ENCODE measurements at regions of chr17 and their contacts with region 1.

Region 1: DNA sequence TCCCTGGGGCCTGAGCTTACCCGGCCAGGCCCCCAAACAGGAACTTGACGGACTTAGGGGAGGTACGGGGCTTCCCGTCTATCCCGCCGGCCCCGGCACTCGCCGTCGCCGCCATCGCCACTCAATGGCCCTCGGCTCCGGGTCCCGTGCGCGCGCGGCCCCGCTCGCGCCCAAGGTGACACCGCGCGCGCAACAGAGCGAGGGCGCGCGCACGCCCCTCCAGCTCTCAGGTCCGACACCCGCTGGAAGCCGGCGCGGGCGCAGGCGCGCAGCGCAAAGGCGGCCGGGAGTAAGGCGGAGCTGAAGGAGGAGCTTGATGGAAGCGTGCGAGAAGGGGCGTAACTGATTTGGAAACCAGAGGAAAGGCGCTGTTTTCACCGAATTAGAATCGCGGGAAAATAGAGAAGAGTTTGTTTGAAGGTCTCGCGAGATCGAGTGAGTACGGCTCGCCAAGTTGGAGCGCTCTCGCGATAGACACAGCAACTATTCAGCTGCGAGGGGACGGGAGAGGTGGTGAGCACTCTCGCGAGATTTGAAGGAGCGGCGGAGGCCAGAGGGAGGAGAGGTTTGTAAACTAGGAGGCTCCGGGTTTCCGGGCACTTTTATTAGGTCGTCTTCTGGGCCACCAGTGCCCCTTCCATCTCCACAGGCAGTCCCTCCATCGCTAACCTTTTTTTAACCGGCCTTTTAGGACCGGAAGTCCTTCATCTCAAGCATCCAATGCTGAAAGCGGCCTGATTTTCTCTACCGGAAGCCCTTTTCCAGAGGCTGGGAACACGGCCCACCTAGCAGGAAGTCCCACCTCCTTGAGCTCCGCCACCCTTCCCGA is at the starts of genes RNF167 and SLC25A11:
- DNase-seq: peak; percentile 98
- ATAC-seq: peak; percentile 85
- H3K4me3 Mint-ChIP-seq: peak within 1 kb of the TSS; percentile 97
- H3K27ac Mint-ChIP-seq: peak within 1 kb of the TSS; percentile 98
- H3K4me1 Mint-ChIP-seq: peaks cover 57% of the 10 kb centered on the region
- H3K27me3 Mint-ChIP-seq: no peaks in the 10 kb centered on the region
- CTCF ChIP-seq: no peak
- total RNA-seq, gene RNF167: 144 to 152 TPM
- total RNA-seq, gene SLC25A11: 80.8 to 87.0 TPM

Region 2: DNA sequence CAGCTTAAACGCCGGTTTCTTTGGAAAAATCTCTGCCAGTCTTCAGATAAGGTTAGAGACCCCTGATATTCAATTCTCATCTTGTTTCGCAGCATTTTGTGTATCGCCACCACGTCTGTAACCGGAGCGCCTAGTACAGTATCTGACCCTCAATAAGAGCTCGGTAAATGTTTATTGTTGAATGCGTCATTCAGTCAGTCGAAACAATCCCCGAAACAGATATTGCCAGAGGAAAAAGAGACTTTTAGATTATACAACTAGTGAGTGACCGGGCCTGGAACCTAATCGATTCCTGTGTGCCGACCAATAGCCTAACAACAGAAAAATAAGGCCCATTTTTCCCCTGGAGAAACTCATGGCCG is 236.7 kb before region 1 on chr17:
- CTCF ChIA-PET with region 1: no interaction called
- POLR2A ChIA-PET with region 1: interaction called, 10 read pairs
- intact Hi-C with region 1: no loop called
- DNase-seq: no peak
- ATAC-seq: no peak
- H3K4me3 Mint-ChIP-seq: peak overlapping the region; percentile 79
- H3K27ac Mint-ChIP-seq: peak overlapping the region; percentile 98
- H3K4me1 Mint-ChIP-seq: peaks cover 42% of the 10 kb centered on the region
- H3K27me3 Mint-ChIP-seq: no peaks in the 10 kb centered on the region
- CTCF ChIP-seq: no peak

Region 3: DNA sequence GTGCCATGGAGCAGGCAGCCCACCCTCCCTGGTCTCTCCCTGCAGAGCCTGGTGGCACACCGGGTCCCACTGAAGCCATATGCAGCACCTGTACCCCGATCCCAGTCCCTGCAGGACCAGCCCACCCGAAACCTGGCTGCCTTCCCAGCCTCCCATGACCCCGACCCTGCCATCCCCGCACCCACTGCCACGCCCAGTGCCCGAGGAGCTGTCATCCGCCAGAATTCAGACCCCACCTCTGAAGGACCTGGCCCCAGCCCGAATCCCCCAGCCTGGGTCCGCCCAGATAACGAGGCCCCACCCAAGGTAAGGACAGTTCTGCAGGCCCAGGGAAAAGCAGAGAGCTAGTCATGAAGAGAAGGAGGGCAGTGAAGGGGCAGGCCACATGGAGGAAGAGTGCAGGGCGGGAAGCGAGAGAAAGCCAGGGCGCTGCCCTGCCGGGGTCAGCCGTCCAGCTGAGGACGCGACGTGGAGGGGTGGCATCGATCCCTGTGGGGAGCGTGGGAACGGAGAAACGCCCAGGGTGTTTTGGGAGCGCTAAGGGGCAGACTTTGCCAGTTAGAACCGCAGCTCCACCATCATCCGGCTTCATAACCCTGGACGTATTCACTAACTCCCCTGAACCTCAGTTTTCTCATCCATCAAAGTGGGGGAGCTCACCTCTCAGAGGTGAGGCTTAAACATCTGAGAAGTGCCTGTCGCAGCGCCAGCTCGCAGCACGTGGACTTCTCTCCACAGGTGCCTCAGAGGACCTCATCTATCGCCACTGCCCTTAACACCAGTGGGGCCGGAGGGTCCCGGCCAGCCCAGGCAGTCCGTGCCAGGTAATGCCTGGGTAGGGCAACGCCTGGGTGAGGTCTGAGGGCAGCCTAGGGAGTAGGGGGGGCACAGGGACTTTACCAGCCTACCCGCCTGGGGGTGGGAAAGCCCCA is 48.3 kb before region 1 on chr17:
- CTCF ChIA-PET with region 1: no interaction called
- POLR2A ChIA-PET with region 1: no interaction called
- intact Hi-C with region 1: no loop called
- DNase-seq: no peak
- ATAC-seq: no peak
- H3K4me3 Mint-ChIP-seq: no peak overlapping the region
- H3K27ac Mint-ChIP-seq: no peak overlapping the region
- H3K4me1 Mint-ChIP-seq: no peaks in the 10 kb centered on the region
- H3K27me3 Mint-ChIP-seq: no peaks in the 10 kb centered on the region
- CTCF ChIP-seq: no peak

Region 4: GRCh38 chr17:4908301-4908700 is 31.7 kb before region 1 on chr17:
- CTCF ChIA-PET with region 1: interaction called, 24 read pairs
- POLR2A ChIA-PET with region 1: interaction called, 41 read pairs
- intact Hi-C with region 1: no loop called
- DNase-seq: peak; percentile 31
- ATAC-seq: peak; percentile 11
- H3K4me3 Mint-ChIP-seq: no peak overlapping the region
- H3K27ac Mint-ChIP-seq: no peak overlapping the region
- H3K4me1 Mint-ChIP-seq: peaks cover 12% of the 10 kb centered on the region
- H3K27me3 Mint-ChIP-seq: no peaks in the 10 kb centered on the region
- CTCF ChIP-seq: no peak

Region 5: GRCh38 chr17:4928881-4929280 is 11.1 kb before region 1 on chr17:
- CTCF ChIA-PET with region 1: interaction called, 3 read pairs
- POLR2A ChIA-PET with region 1: interaction called, 10 read pairs
- intact Hi-C with region 1: no loop called
- DNase-seq: no peak
- ATAC-seq: no peak
- H3K4me3 Mint-ChIP-seq: no peak overlapping the region
- H3K27ac Mint-ChIP-seq: no peak overlapping the region
- H3K4me1 Mint-ChIP-seq: peaks cover 4% of the 10 kb centered on the region
- H3K27me3 Mint-ChIP-seq: no peaks in the 10 kb centered on the region
- CTCF ChIP-seq: no peak

Region 6: GRCh38 chr17:4986951-4987766 is 47.1 kb after region 1 on chr17 and contains the start of gene CAMTA2:
- CTCF ChIA-PET with region 1: interaction called, 5 read pairs
- POLR2A ChIA-PET with region 1: interaction called, 13 read pairs
- intact Hi-C with region 1: no loop called
- DNase-seq: peak; percentile 92
- ATAC-seq: peak; percentile 88
- H3K4me3 Mint-ChIP-seq: peak within 1 kb of the TSS; percentile 85
- H3K27ac Mint-ChIP-seq: peak within 1 kb of the TSS; percentile 92
- H3K4me1 Mint-ChIP-seq: peaks cover 30% of the 10 kb centered on the region
- H3K27me3 Mint-ChIP-seq: no peaks in the 10 kb centered on the region
- CTCF ChIP-seq: peak; percentile 64
- total RNA-seq, gene CAMTA2: 91.5 to 99.0 TPM

Measured in activated CD8-positive, alpha-beta T cell treated with anti-CD3 and anti-CD28 coated beads for 36 hours (primary cell).